Adrenal gland (tissue), 19 donors: ENCODE measurements at regions of chr14 and their contacts with region 1.

Region 1: DNA sequence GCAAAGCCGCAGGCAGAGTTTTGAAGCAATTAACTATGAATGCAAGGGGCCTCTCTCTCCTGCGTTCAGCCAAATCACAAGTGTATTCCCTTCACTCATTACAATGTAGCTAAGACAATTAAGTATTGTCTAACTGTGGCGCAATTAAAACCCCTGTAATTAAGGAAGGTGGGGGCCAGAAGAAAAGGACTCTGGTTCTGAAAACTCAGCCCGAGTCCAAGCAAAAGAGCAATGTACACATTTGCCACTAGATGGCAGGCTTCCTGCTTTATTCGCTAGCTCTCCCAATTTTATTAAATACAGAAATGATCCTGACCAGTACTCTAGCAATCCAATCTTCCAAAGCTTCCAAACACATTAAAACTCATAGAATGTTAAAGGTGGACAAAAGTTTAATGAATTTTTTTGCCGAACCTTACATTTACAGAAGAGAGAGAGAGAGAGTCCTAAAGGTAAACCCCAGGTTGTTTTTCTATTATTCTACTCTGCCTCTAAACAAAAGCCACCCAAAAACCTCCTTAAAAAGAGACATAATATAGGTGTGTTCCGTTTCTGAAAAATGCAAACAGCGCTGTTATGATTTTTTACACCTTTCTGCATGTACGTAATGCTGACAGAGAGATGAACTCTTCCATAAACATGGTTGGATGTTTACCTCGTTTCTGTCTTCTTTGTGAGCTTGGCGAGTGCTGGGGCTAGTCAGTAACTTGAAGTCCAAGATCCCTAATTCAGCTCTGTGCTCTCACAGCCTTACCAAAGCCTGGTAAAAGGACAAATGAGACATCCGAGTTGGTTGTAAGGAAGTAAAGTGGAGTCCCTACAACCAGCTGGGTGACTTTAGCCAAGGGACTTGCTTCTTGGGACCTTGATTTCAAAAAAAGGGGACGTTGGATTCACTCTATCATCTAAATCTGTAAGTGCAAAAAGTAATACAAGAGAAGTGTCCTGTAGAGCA is 50.9 kb upstream of the VASH1 start:
- DNase-seq: peak in 5 of 7 donors; percentile 41 to 63 (median 57)
- H3K4me3 ChIP-seq: no peak overlapping the region
- H3K27ac ChIP-seq: no peak overlapping the region
- H3K4me1 ChIP-seq: peaks cover 7 to 17% of the 10 kb centered on the region in 2 donors
- H3K27me3 ChIP-seq: no peaks in the 10 kb centered on the region
- CTCF ChIP-seq: peak; percentile 77 to 89 (median 82)
- POLR2A ChIP-seq: no peak

Region 2: GRCh38 chr14:76767681-76768656 is 57.6 kb after region 1 on chr14:
- intact Hi-C with region 1: loop called in 1 of 2 experiments (anchors 5 kb)
- DNase-seq: peak in 6 of 7 donors; percentile 64 to 84 (median 67)
- H3K4me3 ChIP-seq: no peak overlapping the region
- H3K27ac ChIP-seq: peak overlapping the region in 3 of 5 donors; percentile 30 to 79 (median 52)
- H3K4me1 ChIP-seq: peaks cover 28 to 39% of the 10 kb centered on the region in 2 donors
- H3K27me3 ChIP-seq: no peaks in the 10 kb centered on the region
- CTCF ChIP-seq: peak in 1 of 6 experiments; percentile 23
- POLR2A ChIP-seq: peak in 1 of 2 donors; percentile 38

Region 3: GRCh38 chr14:76784266-76785264 is 74.2 kb after region 1 on chr14:
- intact Hi-C with region 1: loop called in 1 of 2 experiments (anchors 2 kb)
- DNase-seq: peak; percentile 60 to 91 (median 74)
- H3K4me3 ChIP-seq: no peak overlapping the region
- H3K27ac ChIP-seq: no peak overlapping the region
- H3K4me1 ChIP-seq: peaks cover 17 to 23% of the 10 kb centered on the region in 2 donors
- H3K27me3 ChIP-seq: no peaks in the 10 kb centered on the region
- CTCF ChIP-seq: peak; percentile 56 to 88 (median 82)
- POLR2A ChIP-seq: no peak